Left ventricle myocardium superior (tissue), 1 donor: ENCODE measurements at regions of chr13 and their contacts with region 1.

Region 1: GRCh38 chr13:110593430-110594130 is 21.8 kb upstream of the NAXD start:
- DNase-seq: no peak
- ATAC-seq: peak; percentile 90

Region 2: DNA sequence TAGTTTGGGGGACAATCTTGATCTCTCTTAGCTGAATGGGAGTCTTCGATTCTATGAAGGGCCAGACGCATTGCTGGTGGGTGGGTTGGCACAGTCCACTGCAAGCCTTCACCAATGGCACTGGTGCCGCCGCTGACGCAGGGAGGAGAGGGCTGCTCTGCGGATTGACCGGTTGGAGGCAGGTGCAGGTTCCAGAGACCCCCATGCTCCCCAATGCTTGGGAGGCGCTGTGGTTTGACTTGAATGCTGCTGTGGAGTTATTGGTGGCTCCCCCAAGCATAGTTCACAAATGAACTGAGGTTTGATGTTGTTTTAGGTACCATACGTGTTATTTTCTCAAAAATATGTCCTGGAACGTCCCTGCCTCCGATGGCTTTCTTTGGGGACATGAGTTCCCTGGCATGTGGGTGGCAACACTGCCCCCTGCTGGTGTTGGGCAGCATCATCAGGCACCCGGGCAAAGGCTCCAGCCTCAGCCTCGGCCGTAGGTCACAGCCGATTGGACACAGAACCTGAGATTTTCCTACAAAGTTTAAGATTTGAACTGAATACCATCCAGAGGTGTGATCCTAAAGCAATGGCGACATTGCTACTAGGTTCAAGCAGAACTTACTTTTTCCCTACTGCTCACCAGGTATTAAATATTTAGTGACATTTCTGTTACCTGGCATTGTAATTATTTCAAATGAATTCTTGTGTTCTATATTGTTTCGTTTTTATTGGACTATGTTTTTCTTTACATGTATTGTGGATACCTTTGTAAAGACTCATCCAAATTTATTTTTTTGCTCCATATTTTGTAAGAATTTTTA is 225.8 kb after region 1 on chr13:
- intact Hi-C with region 1: loop called (anchors 2 kb)
- DNase-seq: peak; percentile 86
- ATAC-seq: peak; percentile 94

Region 3: DNA sequence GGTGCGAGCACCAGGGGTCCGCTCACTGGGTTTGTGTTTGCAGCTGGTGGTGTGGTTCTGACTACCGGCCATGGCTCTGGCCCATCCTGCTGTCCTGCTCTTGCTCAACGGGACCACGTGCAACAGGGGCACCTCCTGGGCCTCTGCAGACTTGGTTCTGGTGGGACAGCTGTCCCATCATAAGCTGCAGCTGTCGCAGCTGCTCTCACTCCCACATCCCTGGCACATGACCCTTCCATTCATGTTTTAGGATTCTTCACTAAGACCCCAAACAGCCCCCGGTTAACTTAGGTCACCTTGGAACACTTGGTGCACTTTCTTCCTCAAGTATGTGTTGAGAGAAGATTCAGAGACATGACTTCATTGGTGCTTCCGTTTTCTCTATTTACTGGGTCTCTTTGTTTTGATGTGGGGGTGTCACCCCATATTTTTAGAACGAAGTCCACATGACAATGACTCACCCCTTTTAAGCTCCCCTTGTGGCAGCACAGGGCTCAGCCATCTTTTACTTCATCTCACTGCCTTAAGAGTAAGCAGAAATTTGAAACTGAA is 453.1 kb after region 1 on chr13:
- intact Hi-C with region 1: loop called (anchors 10 kb)
- DNase-seq: no peak
- ATAC-seq: peak; percentile 56

Region 4: GRCh38 chr13:111623208-111623607 is 1029.6 kb after region 1 on chr13:
- intact Hi-C with region 1: no loop called
- DNase-seq: no peak
- ATAC-seq: no peak